CD4-positive, alpha-beta T cell (primary cell): ENCODE measurements at regions of chr11 and their contacts with region 1.

Region 1: DNA sequence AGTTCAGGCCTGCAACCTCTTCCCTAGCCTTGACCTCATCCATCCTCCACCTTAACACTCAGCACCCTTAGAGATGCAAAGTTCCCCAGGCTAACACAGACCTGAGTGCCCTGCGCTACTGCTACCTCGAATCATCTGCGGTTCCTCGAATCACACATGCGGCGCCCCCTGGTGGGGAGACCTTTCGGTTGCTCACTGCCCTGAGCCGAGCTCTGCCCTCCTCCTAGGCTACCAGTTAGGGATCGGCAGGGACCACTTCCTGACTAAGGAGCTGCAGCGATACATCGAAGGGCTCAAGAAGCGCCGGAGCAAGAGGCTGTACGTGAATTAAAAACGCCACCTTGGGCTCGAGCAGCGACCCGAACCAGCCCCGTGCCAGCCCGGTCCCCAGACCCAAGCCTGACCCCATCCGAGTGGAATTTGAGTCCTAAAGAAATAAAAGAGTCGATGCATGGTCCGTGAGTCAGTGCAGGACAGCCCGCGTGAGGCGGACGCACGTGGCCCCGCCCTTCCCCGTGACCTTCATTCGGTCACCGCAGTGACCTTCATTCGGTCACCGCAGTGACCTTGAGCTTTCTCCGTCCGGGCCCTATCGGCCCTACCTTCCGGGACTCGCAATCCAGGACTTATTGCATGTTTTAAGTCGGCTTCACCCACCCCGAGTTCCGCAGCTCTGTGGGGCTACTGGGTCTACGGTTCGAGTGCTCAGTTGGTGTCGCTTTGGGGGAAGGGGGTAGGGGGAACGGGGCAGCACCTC is 830 bp upstream of the ESRRA start:
- DNase-seq: peak; percentile 88 to 98 (median 94)
- ATAC-seq: peak; percentile 27
- H3K4me3 ChIP-seq: peak overlapping the region; percentile 92
- H3K4me3 Mint-ChIP-seq: peak overlapping the region; percentile 98
- H3K27ac ChIP-seq: peak overlapping the region; percentile 84 to 93
- H3K27ac Mint-ChIP-seq: peak overlapping the region; percentile 96
- H3K4me1 ChIP-seq: peaks cover 55% of the 10 kb centered on the region
- H3K4me1 Mint-ChIP-seq: peaks cover 42% of the 10 kb centered on the region
- H3K27me3 ChIP-seq: peaks cover 25 to 26% of the 10 kb centered on the region in 2 experiments
- H3K27me3 Mint-ChIP-seq: peaks cover 34% of the 10 kb centered on the region
- CTCF ChIP-seq: peak; percentile 92

Region 2: DNA sequence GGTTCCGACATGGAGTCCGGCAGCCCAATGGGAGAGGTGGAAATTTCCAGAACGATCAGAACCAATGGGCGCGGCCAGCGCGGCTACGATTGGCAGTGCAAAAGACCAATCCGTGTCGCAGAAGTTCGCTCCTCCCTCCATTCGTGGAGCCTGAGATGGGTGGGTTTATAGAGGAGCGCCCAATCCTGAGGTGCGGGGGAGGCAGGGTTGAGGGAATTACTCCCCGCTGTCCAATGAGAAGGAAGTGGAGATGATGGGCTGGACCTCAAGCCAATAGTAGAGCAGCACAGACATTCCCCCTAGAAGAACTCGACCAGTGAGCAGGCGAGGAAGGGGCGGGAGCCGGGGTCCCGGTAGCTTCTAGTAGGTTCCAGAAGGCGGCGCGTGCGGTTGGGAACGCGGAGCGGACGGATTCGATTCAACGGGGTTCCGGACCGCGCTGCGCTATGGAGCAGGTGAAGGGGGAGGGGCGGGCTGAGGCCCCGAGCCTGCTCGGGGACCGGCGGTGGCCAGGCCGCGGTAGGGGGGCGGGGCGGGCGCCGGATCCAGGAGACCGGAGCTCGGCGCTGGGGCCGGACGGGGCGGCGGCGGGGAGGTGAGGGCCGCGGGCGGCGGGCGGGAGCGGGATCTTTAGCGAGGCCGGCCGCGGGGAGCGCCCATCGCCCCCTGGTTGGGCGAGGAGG is 118.5 kb before region 1 on chr11 and contains the start of gene STIP1:
- CTCF ChIA-PET with region 1: interaction called, 8 read pairs
- POLR2A ChIA-PET with region 1: interaction called, 17 read pairs
- intact Hi-C with region 1: loop called in 1 of 2 experiments (anchors 5 kb)
- DNase-seq: peak in 13 of 14 experiments; percentile 94 to 100 (median 97)
- ATAC-seq: peak; percentile 87
- H3K4me3 ChIP-seq: peak within 1 kb of the TSS; percentile 80
- H3K4me3 Mint-ChIP-seq: peak within 1 kb of the TSS; percentile 99
- H3K27ac ChIP-seq: peak within 1 kb of the TSS; percentile 47 to 57
- H3K27ac Mint-ChIP-seq: no peak within 1 kb of the TSS
- H3K4me1 ChIP-seq: peaks cover 41% of the 10 kb centered on the region
- H3K4me1 Mint-ChIP-seq: peaks cover 45% of the 10 kb centered on the region
- H3K27me3 ChIP-seq: no peaks in the 10 kb centered on the region
- H3K27me3 Mint-ChIP-seq: no peaks in the 10 kb centered on the region
- CTCF ChIP-seq: peak; percentile 15
- total RNA-seq, gene STIP1: 29.0 to 37.5 TPM

Region 3: DNA sequence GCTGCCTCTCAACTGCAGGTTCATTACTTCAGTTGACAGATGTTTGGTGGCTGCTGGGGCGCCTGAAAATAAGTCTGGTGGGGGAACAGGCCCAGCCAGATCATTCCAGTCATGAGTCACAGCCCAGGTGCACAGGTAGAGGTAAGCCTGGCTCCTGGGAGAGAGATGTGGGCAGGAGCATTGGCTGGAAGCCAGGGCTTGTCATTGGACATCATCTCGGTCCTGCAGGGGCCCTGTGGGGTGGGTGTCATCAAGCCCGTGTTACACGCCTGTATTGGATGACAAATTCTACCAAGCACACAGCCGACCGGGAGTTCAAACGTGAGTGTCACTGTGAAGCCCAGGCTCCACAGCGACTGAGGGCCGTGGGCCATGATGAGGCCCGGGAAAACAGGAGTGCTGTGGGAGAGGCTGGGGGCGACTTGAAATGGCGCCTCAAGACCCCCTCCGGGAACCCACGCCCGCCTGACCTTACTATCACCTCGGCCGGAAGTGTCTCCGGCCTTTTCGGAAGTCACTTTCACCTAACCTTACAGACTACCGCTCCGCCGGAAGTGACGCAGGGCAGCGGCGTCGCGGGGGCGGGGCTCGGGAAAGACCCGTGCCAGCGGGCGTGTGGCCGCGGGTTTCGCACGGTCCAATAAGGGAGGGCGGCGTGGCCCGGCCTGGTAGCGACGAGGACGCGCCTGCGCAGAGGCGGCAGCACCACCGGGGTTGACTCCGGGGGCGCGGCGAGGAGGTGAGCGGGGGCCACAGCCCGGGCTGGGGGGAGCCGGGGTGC is 63.9 kb before region 1 on chr11 and contains the start of gene FKBP2:
- CTCF ChIA-PET with region 1: interaction called, 13 read pairs
- POLR2A ChIA-PET with region 1: interaction called, 15 read pairs
- intact Hi-C with region 1: loop called (anchors 2 kb)
- DNase-seq: peak; percentile 92 to 100 (median 97)
- ATAC-seq: peak; percentile 66
- H3K4me3 ChIP-seq: peak within 1 kb of the TSS; percentile 80
- H3K4me3 Mint-ChIP-seq: peak within 1 kb of the TSS; percentile 98
- H3K27ac ChIP-seq: peak within 1 kb of the TSS; percentile 97 to 100
- H3K27ac Mint-ChIP-seq: peak within 1 kb of the TSS; percentile 100
- H3K4me1 ChIP-seq: peaks cover 59% of the 10 kb centered on the region
- H3K4me1 Mint-ChIP-seq: peaks cover 40% of the 10 kb centered on the region
- H3K27me3 ChIP-seq: no peaks in the 10 kb centered on the region
- H3K27me3 Mint-ChIP-seq: no peaks in the 10 kb centered on the region
- CTCF ChIP-seq: no peak
- total RNA-seq, gene FKBP2: 11.2 to 14.6 TPM

Region 4: DNA sequence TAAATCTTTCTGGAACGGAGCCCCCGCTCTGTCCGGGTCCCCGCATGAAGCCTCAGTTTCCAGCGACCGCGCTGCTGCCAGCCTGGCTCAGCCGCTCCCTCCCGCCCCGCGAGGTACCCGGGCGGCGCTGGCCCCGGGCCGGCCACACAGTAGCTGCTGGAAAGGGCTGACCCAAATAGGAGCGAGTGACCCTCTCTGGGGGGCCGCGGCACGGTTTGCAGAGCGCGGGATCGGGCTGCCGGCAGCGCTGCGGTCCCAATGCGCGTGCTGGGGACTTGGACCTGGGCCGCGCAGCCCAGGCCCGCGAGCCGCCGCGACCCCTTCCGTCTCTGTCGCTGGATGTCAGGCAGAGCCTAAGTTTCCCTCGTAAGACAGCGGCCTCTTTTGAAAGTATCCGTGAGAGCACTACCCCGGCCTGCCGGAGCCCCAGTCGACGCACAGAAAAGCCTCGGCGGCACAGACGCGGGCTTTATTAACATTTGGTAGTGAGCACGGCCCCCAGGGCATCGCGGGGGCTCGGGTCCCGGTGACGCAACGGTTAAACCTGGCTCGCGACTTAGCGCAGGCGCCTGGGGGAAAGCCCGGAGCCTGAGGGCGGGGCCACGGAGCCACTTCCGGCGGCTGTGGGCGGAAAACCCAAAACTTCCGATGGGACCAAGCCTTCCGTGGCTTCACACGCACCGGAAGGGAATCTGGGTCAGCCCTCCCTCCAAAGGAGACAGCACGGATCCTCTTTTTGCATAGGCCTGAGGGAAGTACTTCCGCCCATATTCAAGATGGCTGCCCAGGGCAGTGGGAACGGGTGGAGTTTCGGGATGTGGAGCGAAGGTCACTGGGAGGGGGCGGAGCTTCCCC is 34.9 kb before region 1 on chr11:
- CTCF ChIA-PET with region 1: interaction called, 40 read pairs
- POLR2A ChIA-PET with region 1: interaction called, 45 read pairs
- intact Hi-C with region 1: loop called (anchors 1 to 2 kb)
- DNase-seq: peak; percentile 94 to 99 (median 96)
- ATAC-seq: peak; percentile 68
- H3K4me3 ChIP-seq: peak overlapping the region; percentile 97
- H3K4me3 Mint-ChIP-seq: peak overlapping the region; percentile 94
- H3K27ac ChIP-seq: peak overlapping the region; percentile 92 to 99
- H3K27ac Mint-ChIP-seq: peak overlapping the region; percentile 99
- H3K4me1 ChIP-seq: peaks cover 43% of the 10 kb centered on the region
- H3K4me1 Mint-ChIP-seq: peaks cover 32% of the 10 kb centered on the region
- H3K27me3 ChIP-seq: no peaks in the 10 kb centered on the region
- H3K27me3 Mint-ChIP-seq: peaks cover 5% of the 10 kb centered on the region
- CTCF ChIP-seq: no peak

Region 5: DNA sequence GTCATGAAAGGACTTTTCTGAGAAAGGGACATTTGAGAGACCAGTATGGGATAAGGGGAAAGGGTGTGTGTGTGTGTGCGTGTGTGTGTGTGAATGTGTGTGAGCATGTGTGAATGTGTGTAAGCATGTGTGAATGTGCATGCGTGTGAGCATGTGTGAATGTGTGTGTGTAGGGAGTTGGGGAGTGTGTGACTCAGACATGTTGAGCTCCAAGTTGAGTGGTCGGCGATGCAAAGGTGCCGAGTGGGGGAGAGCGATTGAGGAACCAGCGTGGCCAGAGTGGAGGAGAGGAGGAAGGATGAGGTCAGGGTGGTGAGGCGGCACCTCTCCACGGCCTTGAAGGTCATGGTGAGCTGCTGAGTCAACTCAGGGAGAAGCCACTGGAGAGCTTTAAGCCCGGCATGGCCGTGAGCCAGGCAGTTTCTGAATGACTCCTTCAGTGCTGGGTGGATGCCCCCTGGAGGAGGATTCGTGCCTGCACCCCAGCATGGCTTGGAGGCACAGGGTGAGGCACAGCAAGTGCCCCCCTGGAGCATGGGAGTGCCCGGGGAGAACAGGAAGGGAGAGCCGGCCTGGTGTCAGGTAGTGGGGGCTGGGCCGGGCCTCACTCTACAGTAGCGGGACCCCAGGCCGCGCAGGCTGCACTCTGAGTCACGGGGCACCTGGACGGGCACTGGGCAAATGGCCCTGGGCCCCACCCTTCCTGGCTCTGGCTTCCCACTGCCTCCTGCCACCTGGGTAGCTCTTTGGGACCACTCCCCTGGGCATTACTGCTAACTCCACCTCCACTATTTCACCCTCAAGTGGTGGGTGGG is 27.3 kb after region 1 on chr11:
- CTCF ChIA-PET with region 1: interaction called, 10 read pairs
- POLR2A ChIA-PET with region 1: interaction called, 3 read pairs
- intact Hi-C with region 1: no loop called
- DNase-seq: peak; percentile 41 to 86 (median 58)
- ATAC-seq: peak; percentile 93
- H3K4me3 ChIP-seq: no peak overlapping the region
- H3K4me3 Mint-ChIP-seq: no peak overlapping the region
- H3K27ac ChIP-seq: no peak overlapping the region
- H3K27ac Mint-ChIP-seq: peak overlapping the region; percentile 13
- H3K4me1 ChIP-seq: peaks cover 10% of the 10 kb centered on the region
- H3K4me1 Mint-ChIP-seq: peaks cover 9% of the 10 kb centered on the region
- H3K27me3 ChIP-seq: no peaks in the 10 kb centered on the region
- H3K27me3 Mint-ChIP-seq: no peaks in the 10 kb centered on the region
- CTCF ChIP-seq: peak; percentile 8